PC-9 (cell line): ENCODE measurements at regions of chr15 and their contacts with region 1.

Region 1: GRCh38 chr15:74433592-74434262 is at the start of gene SEMA7A:
- DNase-seq: peak; percentile 39 to 80
- H3K4me3 ChIP-seq: peak within 1 kb of the TSS; percentile 69
- H3K27ac ChIP-seq: no peak within 1 kb of the TSS
- H3K4me1 ChIP-seq: peaks cover 6% of the 10 kb centered on the region; the same call in 1 of the 2 replicates
- H3K27me3 ChIP-seq: no peaks in the 10 kb centered on the region
- CTCF ChIP-seq: no peak
- total RNA-seq, gene SEMA7A: 8.3 and 14.5 TPM in 2 replicates

Region 2: DNA sequence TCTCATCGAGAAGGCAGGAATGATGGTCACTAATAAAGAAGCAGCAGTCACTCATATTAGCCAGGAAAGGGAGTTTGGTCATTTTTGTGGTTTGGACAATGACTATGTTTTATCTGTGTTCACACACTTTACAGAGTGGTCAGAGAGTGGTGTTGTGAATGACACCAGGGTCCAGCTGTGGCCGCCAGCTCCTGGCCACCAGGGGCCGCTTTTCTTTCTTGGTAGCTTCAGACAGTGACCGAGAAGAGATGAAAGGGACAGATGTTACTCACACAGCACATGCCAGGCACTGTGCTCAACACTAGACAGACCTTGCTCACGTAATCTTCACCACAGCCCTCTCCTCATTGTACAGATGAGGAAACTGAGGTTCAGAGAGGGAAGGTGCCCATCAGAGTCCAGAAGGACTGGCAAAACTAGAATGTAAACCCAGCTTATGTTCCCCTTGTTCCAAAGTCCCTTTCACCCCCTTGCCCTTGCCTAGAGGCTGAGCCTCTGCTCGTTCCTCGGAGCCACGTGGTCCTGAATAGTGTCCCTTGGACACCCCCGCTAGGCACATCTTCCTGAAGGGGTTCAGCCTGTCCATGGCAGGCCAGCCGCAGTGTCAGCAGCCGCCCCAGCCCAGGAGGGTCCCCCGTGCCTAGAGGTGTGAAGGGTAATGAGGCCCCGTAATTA is 121.9 kb before region 1 on chr15:
- CTCF ChIA-PET with region 1: no interaction called
- POLR2A ChIA-PET with region 1: no interaction called
- intact Hi-C with region 1: no loop called
- DNase-seq: peak in 1 of 2 experiments; percentile 25
- H3K4me3 ChIP-seq: no peak overlapping the region
- H3K27ac ChIP-seq: no peak overlapping the region
- H3K4me1 ChIP-seq: peaks cover 6% of the 10 kb centered on the region; the same call in 1 of the 2 replicates
- H3K27me3 ChIP-seq: no peaks in the 10 kb centered on the region
- CTCF ChIP-seq: peak; percentile 69

Region 3: DNA sequence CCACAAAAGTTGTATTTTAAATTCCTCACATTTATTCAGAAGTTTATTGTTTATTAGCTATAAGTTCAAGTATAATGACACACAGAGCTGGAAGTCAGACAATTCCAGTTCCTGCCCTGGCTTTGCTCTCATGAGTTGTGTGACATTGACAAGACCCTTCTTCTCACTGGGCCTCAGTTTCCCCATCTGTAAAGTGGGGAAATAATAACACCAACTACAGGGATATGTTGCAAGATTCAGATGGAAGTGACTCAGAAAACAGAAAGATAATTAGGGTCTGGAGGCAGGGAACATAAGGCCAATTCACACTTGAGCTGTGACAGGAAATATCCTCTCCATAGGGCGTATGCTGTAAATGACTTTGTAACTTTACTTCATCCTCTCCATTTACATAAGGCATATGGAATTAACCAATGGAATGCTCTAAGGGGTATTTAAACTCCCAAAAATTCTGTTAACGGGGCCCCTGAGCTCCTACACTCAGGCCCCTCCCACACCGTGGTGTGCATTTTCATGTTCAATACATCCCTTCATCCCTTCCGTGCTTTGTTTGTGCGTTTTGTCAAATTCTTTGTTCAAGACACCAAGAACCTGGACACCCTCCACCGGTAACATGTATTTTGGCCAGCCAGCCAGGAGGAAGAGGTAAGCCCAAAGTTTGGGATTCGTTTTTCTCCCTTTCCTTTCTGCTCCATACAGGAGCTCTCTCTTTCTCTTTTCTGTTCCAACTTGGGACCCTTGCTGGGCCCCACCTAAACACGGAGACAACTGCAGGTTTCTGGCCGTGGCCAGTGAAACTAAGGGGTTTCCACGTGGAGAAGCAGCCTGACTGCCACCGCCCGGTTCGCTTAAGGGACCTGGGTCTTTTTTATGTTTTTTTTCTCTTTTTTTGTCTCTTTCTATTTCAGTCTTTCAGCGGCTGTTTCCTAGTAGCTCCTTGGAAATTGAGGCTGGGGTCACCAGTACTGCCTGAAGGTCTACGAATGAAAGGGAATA is 83.1 kb before region 1 on chr15:
- CTCF ChIA-PET with region 1: no interaction called
- POLR2A ChIA-PET with region 1: no interaction called
- intact Hi-C with region 1: no loop called
- DNase-seq: no peak
- H3K4me3 ChIP-seq: no peak overlapping the region
- H3K27ac ChIP-seq: no peak overlapping the region
- H3K4me1 ChIP-seq: no peaks in the 10 kb centered on the region
- H3K27me3 ChIP-seq: no peaks in the 10 kb centered on the region
- CTCF ChIP-seq: no peak

Region 4: GRCh38 chr15:74387576-74388352 is 46.0 kb before region 1 on chr15:
- CTCF ChIA-PET with region 1: interaction called, 20 read pairs
- POLR2A ChIA-PET with region 1: interaction called, 19 read pairs
- intact Hi-C with region 1: loop called (anchors 1 kb)
- DNase-seq: peak; percentile 72 to 85
- H3K4me3 ChIP-seq: no peak overlapping the region
- H3K27ac ChIP-seq: peak overlapping the region; percentile 50; the same call in 1 of the 2 replicates
- H3K4me1 ChIP-seq: peaks cover 75% of the 10 kb centered on the region
- H3K27me3 ChIP-seq: no peaks in the 10 kb centered on the region
- CTCF ChIP-seq: no peak